Activated T-helper 2 cell treated with anti-CD3 and anti-CD28 coated beads, Interferon-gamma antibody, Interleukin-2, Interleukin-4, amounts not matched to agents 10 μg/mL and 5 μg/mL and 100 μg/mL, durations not matched to agents 14 hours and 24 hours and 36 hours (primary cell): ENCODE measurements at regions of chr11 and their contacts with region 1.

Region 1: DNA sequence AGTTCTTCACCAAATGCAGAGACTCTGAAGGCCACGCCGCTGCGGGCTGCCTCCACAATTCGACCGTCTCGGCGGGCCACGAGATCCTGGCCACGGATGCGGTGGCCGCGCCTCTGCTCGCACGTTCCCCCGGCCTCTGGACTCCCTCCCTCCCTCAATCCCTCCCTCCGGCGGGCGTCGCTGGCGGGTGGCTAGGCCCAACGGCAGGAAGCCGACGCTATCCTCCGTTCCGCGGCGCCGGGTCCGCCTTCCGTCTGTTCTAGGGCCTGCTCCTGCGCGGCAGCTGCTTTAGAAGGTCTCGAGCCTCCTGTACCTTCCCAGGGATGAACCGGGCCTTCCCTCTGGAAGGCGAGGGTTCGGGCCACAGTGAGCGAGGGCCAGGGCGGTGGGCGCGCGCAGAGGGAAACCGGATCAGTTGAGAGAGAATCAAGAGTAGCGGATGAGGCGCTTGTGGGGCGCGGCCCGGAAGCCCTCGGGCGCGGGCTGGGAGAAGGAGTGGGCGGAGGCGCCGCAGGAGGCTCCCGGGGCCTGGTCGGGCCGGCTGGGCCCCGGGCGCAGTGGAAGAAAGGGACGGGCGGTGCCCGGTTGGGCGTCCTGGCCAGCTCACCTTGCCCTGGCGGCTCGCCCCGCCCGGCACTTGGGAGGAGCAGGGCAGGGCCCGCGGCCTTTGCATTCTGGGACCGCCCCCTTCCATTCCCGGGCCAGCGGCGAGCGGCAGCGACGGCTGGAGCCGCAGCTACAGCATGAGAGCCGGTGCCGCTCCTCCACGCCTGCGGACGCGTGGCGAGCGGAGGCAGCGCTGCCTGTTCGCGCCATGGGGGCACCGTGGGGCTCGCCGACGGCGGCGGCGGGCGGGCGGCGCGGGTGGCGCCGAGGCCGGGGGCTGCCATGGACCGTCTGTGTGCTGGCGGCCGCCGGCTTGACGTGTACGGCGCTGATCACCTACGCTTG is at the start of gene FUT4:
- DNase-seq: peak; percentile 72
- H3K4me3 Mint-ChIP-seq: peak within 1 kb of the TSS; percentile 99
- H3K27ac Mint-ChIP-seq: peak within 1 kb of the TSS; percentile 100
- H3K4me1 Mint-ChIP-seq: peaks cover 32% of the 10 kb centered on the region
- H3K27me3 Mint-ChIP-seq: no peaks in the 10 kb centered on the region
- total RNA-seq, gene FUT4: 8.4 and 8.9 TPM in 2 replicates

Region 2: GRCh38 chr11:94493281-94494125 is 50.5 kb before region 1 on chr11 and contains the starts of genes ANKRD49 and MRE11:
- intact Hi-C with region 1: loop called (anchors 1 kb)
- DNase-seq: peak; percentile 96
- H3K4me3 Mint-ChIP-seq: peak within 1 kb of the TSS; percentile 94
- H3K27ac Mint-ChIP-seq: peak within 1 kb of the TSS; percentile 92
- H3K4me1 Mint-ChIP-seq: peaks cover 23% of the 10 kb centered on the region
- H3K27me3 Mint-ChIP-seq: no peaks in the 10 kb centered on the region
- total RNA-seq, gene ANKRD49: 19.4 and 20.7 TPM in 2 replicates
- total RNA-seq, gene MRE11: 45.8 and 47.4 TPM in 2 replicates

Region 3: GRCh38 chr11:94511932-94512781 is 31.8 kb before region 1 on chr11 and contains the start of gene C11orf97:
- intact Hi-C with region 1: loop called (anchors 2 kb)
- DNase-seq: peak; percentile 48
- H3K4me3 Mint-ChIP-seq: peak within 1 kb of the TSS; percentile 50
- H3K27ac Mint-ChIP-seq: no peak within 1 kb of the TSS
- H3K4me1 Mint-ChIP-seq: peaks cover 12% of the 10 kb centered on the region
- H3K27me3 Mint-ChIP-seq: peaks cover 62% of the 10 kb centered on the region
- total RNA-seq, gene C11orf97: not detected in 2 replicates

Region 4: DNA sequence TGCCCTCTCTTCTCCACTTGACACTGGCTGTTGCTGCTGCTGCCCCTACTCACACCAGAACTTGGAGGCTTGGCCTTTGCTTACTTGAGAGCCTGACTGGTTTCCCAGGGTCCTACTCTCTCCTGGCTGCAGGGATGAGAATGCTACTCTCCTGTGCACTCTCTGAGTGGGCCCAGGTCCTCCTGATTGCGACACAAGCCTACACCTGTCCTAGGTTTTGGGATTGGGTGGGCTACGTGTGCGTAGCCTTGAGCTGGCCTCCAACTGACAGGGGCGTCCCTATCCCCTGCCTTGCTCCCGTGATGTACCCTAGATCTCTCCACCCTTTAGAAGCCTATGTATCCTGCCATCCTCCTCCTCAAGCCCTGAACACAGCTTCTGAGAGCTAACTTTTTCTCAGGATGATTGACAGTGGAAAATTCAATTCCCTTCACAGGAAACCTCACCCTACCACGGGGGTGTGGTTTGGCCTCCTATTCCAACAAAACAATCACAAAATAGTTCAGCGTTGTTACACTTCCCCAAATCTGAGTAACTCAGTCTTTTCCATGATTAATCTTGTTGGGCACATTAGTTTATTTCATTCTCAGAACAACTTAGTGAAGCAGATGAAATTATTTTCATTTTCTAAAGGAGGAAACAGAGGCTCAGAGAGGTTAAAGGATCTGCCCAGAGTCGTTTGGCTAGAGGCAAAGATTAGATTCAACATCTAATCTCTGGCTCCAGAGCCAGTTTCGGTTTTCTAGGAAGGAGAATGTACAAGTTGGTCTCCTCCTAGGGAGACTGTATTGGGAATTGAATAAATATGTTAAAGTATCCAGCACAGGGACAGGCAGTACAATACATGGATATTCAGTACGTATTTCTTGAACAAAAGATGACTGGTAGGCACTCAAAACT is 206.6 kb after region 1 on chr11:
- intact Hi-C with region 1: no loop called
- DNase-seq: no peak
- H3K4me3 Mint-ChIP-seq: no peak overlapping the region
- H3K27ac Mint-ChIP-seq: no peak overlapping the region
- H3K4me1 Mint-ChIP-seq: no peaks in the 10 kb centered on the region
- H3K27me3 Mint-ChIP-seq: peaks cover 36% of the 10 kb centered on the region

Region 5: DNA sequence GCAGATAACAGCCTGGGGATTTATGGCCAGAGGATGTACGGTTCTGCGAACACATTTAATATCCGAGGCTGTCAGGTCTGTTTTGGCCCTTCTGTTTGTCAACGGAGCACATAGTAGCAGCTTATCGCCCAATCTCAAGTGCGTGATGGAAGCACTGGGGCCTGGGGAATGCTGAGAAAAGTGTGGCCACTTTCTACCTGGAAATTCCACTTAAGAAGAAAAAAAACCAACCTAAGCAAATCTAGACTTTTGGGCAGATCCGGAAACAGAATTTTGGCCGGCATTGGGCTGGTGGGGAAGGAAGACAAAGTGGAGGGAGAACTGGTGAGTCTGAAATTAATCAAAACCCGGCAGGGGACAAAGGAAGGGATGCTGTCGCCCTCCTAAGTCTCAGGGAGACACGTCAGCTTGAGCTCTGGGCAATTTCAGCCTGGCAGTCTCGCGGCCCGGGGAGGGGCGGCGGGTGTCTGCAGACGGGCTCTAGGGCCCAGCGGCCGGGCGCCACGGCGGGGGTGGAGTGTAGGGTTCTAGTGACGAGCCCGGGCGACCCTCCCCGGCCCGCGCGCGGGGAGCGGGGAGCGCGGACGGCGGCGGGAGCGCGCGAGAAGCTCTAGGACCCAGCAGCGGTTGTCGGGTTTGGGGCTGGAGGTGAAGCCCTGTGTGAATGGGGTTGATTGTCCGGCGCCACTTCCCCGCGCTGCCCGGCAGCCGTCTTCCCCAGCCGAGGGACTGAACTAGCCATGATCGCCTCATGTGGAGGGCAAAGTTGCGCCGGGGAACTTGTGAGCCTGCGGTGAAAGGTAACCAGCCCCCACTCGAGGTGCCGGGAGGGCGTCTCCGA is 224.0 kb after region 1 on chr11 and contains the start of gene AMOTL1:
- intact Hi-C with region 1: loop called (anchors 10 kb)
- DNase-seq: peak; percentile 25
- H3K4me3 Mint-ChIP-seq: peak within 1 kb of the TSS; percentile 76
- H3K27ac Mint-ChIP-seq: peak within 1 kb of the TSS; percentile 49
- H3K4me1 Mint-ChIP-seq: peaks cover 6% of the 10 kb centered on the region
- H3K27me3 Mint-ChIP-seq: peaks cover 48% of the 10 kb centered on the region
- total RNA-seq, gene AMOTL1: 4.8 and 5.9 TPM in 2 replicates

Region 6: DNA sequence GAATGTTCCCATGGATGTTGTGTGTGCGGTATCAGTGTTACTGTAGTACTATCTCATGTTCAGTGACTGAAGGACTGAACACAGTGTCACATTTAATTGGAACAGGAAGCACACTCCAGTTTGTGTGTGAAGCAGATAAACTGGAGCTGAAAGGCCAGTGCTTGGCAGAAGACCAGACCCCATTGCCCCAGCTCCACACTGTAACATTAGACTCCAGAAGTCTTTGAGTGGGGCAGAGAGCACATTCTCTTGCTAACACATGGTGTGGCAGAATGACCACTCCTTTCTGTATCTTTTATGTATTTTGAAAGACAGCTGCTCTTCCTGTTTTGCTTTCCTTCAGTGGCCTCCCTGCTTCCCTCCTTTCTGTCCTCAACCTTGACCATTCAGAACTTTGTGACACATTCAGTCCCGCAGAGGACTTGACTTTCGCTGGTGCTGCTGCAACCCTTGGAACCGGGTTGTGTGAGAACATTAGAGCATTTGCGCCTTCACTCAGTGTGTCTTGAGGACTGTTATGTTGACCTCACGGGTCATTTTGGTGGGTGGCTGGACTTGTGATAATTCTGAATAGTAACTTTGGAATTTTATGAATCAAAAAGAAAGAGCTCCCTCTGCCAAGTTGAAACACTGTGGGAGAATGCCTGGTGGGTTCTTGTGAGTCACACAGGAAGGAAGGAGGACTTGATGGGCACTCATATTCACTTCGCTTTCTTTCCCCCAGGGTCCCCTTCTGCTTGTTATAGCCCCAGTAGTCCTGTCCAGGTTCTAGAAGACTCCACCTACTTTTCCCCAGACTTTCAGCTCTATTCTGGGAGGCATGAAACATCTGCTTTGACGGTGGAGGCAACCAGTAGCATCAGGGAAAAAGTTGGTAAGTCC is 250.6 kb after region 1 on chr11:
- intact Hi-C with region 1: no loop called
- DNase-seq: no peak
- H3K4me3 Mint-ChIP-seq: no peak overlapping the region
- H3K27ac Mint-ChIP-seq: no peak overlapping the region
- H3K4me1 Mint-ChIP-seq: no peaks in the 10 kb centered on the region
- H3K27me3 Mint-ChIP-seq: peaks cover 11% of the 10 kb centered on the region

Region 7: DNA sequence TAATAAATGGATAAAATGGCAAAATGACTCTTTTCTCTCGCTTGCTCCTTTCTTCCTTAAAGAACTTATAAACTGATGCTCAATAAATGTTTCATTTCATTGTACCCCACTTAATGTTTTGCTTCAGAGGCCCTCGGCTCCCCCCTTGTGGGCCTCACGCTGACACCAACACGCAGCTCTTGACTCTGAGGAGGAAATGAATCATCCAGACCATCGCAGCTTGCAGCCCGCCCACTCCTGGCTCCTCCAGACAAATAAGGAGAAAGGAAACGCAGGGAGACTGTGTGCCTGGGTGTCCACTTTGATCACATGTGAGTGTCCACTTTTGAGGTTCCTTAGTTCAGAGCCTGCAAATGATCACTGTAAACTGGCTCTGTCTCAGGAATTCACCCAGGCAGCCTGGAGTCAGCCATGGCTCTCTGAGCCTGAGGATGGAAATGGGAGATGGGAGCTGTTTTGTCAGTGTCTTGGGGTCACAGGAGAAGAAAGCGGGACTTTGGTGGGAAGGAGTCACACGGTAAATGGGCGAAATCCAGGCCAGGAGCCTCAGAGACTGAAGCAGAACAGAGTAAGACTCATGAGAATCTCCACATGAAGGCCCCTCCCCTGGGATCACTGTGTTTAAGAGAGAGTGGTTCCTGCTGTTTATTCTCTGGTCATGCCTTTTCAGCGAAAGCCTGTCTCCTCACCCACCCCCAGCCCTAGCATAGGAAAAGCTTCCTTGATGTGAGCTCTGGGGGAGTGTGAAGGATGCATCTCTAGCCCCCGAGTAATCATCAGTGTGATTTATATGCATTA is 332.9 kb after region 1 on chr11:
- intact Hi-C with region 1: loop called (anchors 10 kb)
- DNase-seq: peak; percentile 43
- H3K4me3 Mint-ChIP-seq: peak overlapping the region; percentile 63
- H3K27ac Mint-ChIP-seq: peak overlapping the region; percentile 89
- H3K4me1 Mint-ChIP-seq: peaks cover 31% of the 10 kb centered on the region
- H3K27me3 Mint-ChIP-seq: peaks cover 2% of the 10 kb centered on the region